SK-N-SH (cell line): ENCODE measurements at regions of chr1 and their contacts with region 1.

Region 1: GRCh38 chr1:20493839-20494608 is 8.0 kb upstream of the CAMK2N1 start:
- DNase-seq: peak; percentile 88
- H3K4me3 ChIP-seq: peak overlapping the region in 1 of 2 experiments; percentile 26; a peak in 2 of 4 replicates
- H3K27ac ChIP-seq: peak overlapping the region; percentile 9 to 40; a peak in 1 of 4 replicates
- H3K4me1 ChIP-seq: peaks cover 11 to 16% of the 10 kb centered on the region in 2 experiments; a peak in 3 of 4 replicates
- H3K27me3 ChIP-seq: no peaks in the 10 kb centered on the region
- CTCF ChIP-seq: peak; percentile 95
- EP300 ChIP-seq: no peak; a peak in 1 of 4 replicates
- RAD21 ChIP-seq: peak; percentile 100

Region 2: GRCh38 chr1:19918057-19918456 is 576.0 kb before region 1 on chr1:
- CTCF ChIA-PET with region 1: interaction called, 35 read pairs
- POLR2A ChIA-PET with region 1: no interaction called
- DNase-seq: peak; percentile 86
- H3K4me3 ChIP-seq: peak overlapping the region in 1 of 2 experiments; percentile 30; a peak in 1 of 4 replicates
- H3K27ac ChIP-seq: no peak overlapping the region
- H3K4me1 ChIP-seq: peaks cover 0 to 3% of the 10 kb centered on the region in 2 experiments; a peak in 1 of 4 replicates
- H3K27me3 ChIP-seq: no peaks in the 10 kb centered on the region
- CTCF ChIP-seq: peak; percentile 95
- EP300 ChIP-seq: no peak
- RAD21 ChIP-seq: peak; percentile 94

Region 3: GRCh38 chr1:20151906-20152598 is 342.0 kb before region 1 on chr1:
- CTCF ChIA-PET with region 1: interaction called, 16 read pairs
- POLR2A ChIA-PET with region 1: no interaction called
- DNase-seq: peak; percentile 94
- H3K4me3 ChIP-seq: peak overlapping the region; percentile 45 to 49
- H3K27ac ChIP-seq: no peak overlapping the region
- H3K4me1 ChIP-seq: peaks cover 0 to 5% of the 10 kb centered on the region in 2 experiments; a peak in 1 of 4 replicates
- H3K27me3 ChIP-seq: no peaks in the 10 kb centered on the region; the same call in 1 of the 2 replicates
- CTCF ChIP-seq: peak; percentile 88
- EP300 ChIP-seq: no peak
- RAD21 ChIP-seq: peak; percentile 90

Region 4: GRCh38 chr1:20361806-20362640 is 132.0 kb before region 1 on chr1:
- CTCF ChIA-PET with region 1: interaction called, 57 read pairs
- POLR2A ChIA-PET with region 1: no interaction called
- DNase-seq: peak; percentile 79
- H3K4me3 ChIP-seq: no peak overlapping the region; a peak in 1 of 4 replicates
- H3K27ac ChIP-seq: no peak overlapping the region
- H3K4me1 ChIP-seq: peaks cover 0 to 19% of the 10 kb centered on the region in 2 experiments; a peak in 2 of 4 replicates
- H3K27me3 ChIP-seq: peaks cover 27% of the 10 kb centered on the region
- CTCF ChIP-seq: peak; percentile 70
- EP300 ChIP-seq: no peak
- RAD21 ChIP-seq: peak; percentile 77

Region 5: DNA sequence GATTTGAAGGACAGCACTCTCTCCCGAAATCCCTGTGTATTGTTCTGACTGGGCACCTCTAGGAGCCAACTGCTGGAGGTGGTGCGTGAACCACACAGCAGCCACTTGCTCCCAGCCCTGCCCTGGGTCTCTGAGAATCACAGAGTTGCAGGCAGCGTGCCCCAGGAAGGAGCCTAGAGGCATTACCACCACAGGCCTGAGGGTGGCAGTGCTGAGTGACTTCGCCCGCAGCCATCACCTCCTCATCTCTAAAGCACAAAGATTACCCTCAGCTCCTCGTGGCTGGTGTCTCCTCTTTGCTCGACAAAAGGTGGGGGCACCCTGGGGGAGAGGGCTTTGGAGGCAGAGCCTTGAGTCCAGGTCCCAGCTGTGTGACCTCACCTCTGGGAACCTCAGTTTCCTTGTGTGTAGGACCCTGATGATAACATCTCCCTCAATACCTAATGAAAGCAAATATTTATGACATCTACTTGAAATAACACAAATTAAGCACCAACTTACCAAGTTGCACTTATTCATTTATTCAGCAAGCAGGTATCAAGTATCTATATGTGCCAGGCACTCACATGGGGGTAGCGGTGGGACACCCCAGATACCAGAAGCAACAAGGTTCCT is 117.0 kb before region 1 on chr1:
- CTCF ChIA-PET with region 1: interaction called, 29 read pairs
- POLR2A ChIA-PET with region 1: no interaction called
- DNase-seq: peak; percentile 75
- H3K4me3 ChIP-seq: no peak overlapping the region
- H3K27ac ChIP-seq: no peak overlapping the region
- H3K4me1 ChIP-seq: no peaks in the 10 kb centered on the region; a peak in 1 of 4 replicates
- H3K27me3 ChIP-seq: no peaks in the 10 kb centered on the region
- CTCF ChIP-seq: peak; percentile 76
- EP300 ChIP-seq: no peak
- RAD21 ChIP-seq: peak; percentile 70

Region 6: GRCh38 chr1:20430355-20431175 is 63.5 kb before region 1 on chr1:
- CTCF ChIA-PET with region 1: interaction called, 97 read pairs
- POLR2A ChIA-PET with region 1: no interaction called
- DNase-seq: peak; percentile 86
- H3K4me3 ChIP-seq: peak overlapping the region in 1 of 2 experiments; percentile 43; a peak in 1 of 4 replicates
- H3K27ac ChIP-seq: no peak overlapping the region
- H3K4me1 ChIP-seq: no peaks in the 10 kb centered on the region; a peak in 2 of 4 replicates
- H3K27me3 ChIP-seq: no peaks in the 10 kb centered on the region
- CTCF ChIP-seq: peak; percentile 81
- EP300 ChIP-seq: no peak
- RAD21 ChIP-seq: peak; percentile 88

Region 7: GRCh38 chr1:20507564-20508410 is 13.8 kb after region 1 on chr1 and contains the start of gene MUL1:
- CTCF ChIA-PET with region 1: interaction called, 16 read pairs
- POLR2A ChIA-PET with region 1: interaction called, 7 read pairs
- DNase-seq: peak; percentile 96
- H3K4me3 ChIP-seq: peak within 1 kb of the TSS; percentile 92 to 97
- H3K27ac ChIP-seq: peak within 1 kb of the TSS; percentile 67 to 70
- H3K4me1 ChIP-seq: peaks cover 0 to 7% of the 10 kb centered on the region in 2 experiments; a peak in 1 of 4 replicates
- H3K27me3 ChIP-seq: no peaks in the 10 kb centered on the region; the same call in 1 of the 2 replicates
- CTCF ChIP-seq: no peak
- EP300 ChIP-seq: no peak
- RAD21 ChIP-seq: no peak
- polyA plus RNA-seq, gene MUL1: 22.8 and 26.4 TPM in 2 replicates

Region 8: GRCh38 chr1:22208235-22208972 is 1714.4 kb after region 1 on chr1:
- CTCF ChIA-PET with region 1: no interaction called
- POLR2A ChIA-PET with region 1: no interaction called
- DNase-seq: peak; percentile 59
- H3K4me3 ChIP-seq: no peak overlapping the region
- H3K27ac ChIP-seq: no peak overlapping the region
- H3K4me1 ChIP-seq: peaks cover 0 to 12% of the 10 kb centered on the region in 2 experiments; a peak in 1 of 4 replicates
- H3K27me3 ChIP-seq: peaks cover 47% of the 10 kb centered on the region
- CTCF ChIP-seq: no peak
- EP300 ChIP-seq: no peak
- RAD21 ChIP-seq: no peak